A673 (cell line): ENCODE measurements at regions of chr4 and their contacts with region 1.

Region 1: GRCh38 chr4:180811556-180811955 is 1431.6 kb upstream of the TENM3 start:
- DNase-seq: no peak
- H3K4me3 ChIP-seq: no peak overlapping the region
- H3K27ac ChIP-seq: no peak overlapping the region
- H3K4me1 ChIP-seq: no peaks in the 10 kb centered on the region
- H3K27me3 ChIP-seq: no peaks in the 10 kb centered on the region
- CTCF ChIP-seq: no peak

Region 2: GRCh38 chr4:180766944-180767729 is 44.4 kb before region 1 on chr4:
- CTCF ChIA-PET with region 1: no interaction called
- POLR2A ChIA-PET with region 1: no interaction called
- intact Hi-C with region 1: no loop called
- DNase-seq: no peak
- H3K4me3 ChIP-seq: no peak overlapping the region
- H3K27ac ChIP-seq: no peak overlapping the region
- H3K4me1 ChIP-seq: no peaks in the 10 kb centered on the region
- H3K27me3 ChIP-seq: no peaks in the 10 kb centered on the region
- CTCF ChIP-seq: no peak

Region 3: GRCh38 chr4:180840142-180840541 is 28.6 kb after region 1 on chr4:
- CTCF ChIA-PET with region 1: no interaction called
- POLR2A ChIA-PET with region 1: interaction called, 17 read pairs
- intact Hi-C with region 1: no loop called
- DNase-seq: peak; percentile 24
- H3K4me3 ChIP-seq: no peak overlapping the region
- H3K27ac ChIP-seq: no peak overlapping the region
- H3K4me1 ChIP-seq: no peaks in the 10 kb centered on the region
- H3K27me3 ChIP-seq: no peaks in the 10 kb centered on the region
- CTCF ChIP-seq: peak; percentile 40